RWPE1 (cell line): ENCODE measurements at regions of chr1 and their contacts with region 1.

Region 1: DNA sequence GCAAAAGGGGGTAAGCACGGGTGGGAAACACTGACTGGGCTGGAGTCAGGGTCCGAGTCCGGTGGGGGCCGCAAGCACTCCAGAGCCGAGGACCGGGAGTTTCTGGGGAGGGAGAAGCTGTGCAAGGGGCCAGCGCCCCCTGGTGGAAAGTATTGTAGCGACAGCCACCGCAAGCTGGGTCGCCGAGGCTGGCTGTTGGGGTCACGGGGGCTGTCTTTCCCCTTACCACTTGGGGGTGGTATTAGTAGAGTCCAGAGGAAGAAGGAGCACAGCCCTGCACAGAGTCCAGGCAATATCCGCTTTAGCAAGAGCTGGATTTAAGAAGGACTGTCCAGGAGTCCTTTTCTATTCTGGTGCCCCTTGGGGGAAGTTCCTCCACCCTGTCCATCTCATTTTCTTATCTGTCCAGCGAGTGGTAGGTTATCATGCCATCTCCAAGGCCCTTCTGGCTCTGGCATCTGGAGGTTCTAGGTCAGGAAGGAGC is 17.9 kb upstream of the ETV3 start:
- DNase-seq: peak; percentile 68
- H3K27ac ChIP-seq: no peak overlapping the region
- CTCF ChIP-seq: peak; percentile 94

Region 2: DNA sequence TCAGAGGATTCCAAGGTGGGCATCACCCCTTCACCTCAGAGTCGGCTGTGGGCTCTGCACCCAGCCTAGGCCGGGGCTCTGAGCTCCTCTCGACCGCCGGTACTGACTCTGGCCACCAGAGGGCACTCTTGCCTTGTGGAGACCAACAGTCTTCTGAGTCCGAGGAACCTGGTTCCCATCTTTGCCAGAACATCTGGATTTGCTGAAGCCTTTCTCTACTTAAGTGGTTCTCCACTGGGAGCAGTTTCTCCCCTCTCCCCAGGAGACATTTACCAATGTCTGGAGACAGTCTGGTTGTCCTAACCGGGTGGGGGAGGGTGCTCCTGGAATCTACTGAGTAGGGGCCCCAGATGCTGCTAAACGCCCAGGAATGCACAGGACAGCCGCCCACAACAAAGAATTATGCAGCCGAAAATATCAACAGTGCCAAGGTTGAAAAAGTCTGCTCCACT is 65.9 kb before region 1 on chr1:
- CTCF ChIA-PET with region 1: interaction called, 154 read pairs
- POLR2A ChIA-PET with region 1: no interaction called
- DNase-seq: peak; percentile 75
- H3K27ac ChIP-seq: no peak overlapping the region
- CTCF ChIP-seq: peak; percentile 92

Region 3: GRCh38 chr1:157138220-157139051 is 17.7 kb before region 1 on chr1 and contains the start of gene ETV3:
- CTCF ChIA-PET with region 1: interaction called, 27 read pairs
- POLR2A ChIA-PET with region 1: interaction called, 4 read pairs
- DNase-seq: peak; percentile 94
- H3K27ac ChIP-seq: peak within 1 kb of the TSS; percentile 89
- CTCF ChIP-seq: no peak